ENCODE measurements at regions of chr1 and their contacts with region 1.

Region 1: DNA sequence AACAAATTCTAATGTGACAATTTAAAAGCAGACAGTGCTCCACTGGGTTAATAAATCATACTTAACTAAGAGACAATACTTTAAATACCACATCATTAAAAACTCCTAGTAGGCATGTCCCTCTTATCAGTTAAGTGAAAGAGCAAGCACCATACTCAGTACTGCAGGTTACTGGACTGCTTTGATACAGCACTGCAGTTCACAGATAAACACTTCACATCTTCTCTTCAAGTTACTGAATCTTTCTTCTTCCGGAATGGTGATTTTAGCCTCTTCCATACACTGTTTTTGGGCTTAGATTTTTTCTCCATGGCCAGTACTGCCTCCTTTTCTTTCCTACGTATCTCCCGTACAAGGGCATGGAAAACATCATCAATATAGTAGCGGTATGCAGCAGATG is 11.0 kb downstream of the RIT1 start:
- DNase-seq: no peak
- ATAC-seq: no peak
- H3K4me3 ChIP-seq: no peak overlapping the region
- H3K27ac ChIP-seq: no peak overlapping the region
- H3K4me1 ChIP-seq: no peaks in the 10 kb centered on the region
- H3K27me3 ChIP-seq: no peaks in the 10 kb centered on the region
- CTCF ChIP-seq: no peak

Region 2: GRCh38 chr1:154559466-154560088 is 1340.6 kb before region 1 on chr1:
- CTCF ChIA-PET with region 1: no interaction called
- POLR2A ChIA-PET with region 1: no interaction called
- in situ Hi-C with region 1: no loop called
- intact Hi-C with region 1: no loop called
- DNase-seq: peak; percentile 89
- ATAC-seq: peak; percentile 78
- H3K4me3 ChIP-seq: peak overlapping the region; percentile 81
- H3K27ac ChIP-seq: peak overlapping the region; percentile 91
- H3K4me1 ChIP-seq: peaks cover 14% of the 10 kb centered on the region
- H3K27me3 ChIP-seq: no peaks in the 10 kb centered on the region
- CTCF ChIP-seq: peak; percentile 92

Region 3: GRCh38 chr1:155729031-155729898 is 170.9 kb before region 1 on chr1:
- CTCF ChIA-PET with region 1: no interaction called
- POLR2A ChIA-PET with region 1: interaction called, 10 read pairs
- in situ Hi-C with region 1: no loop called
- intact Hi-C with region 1: no loop called
- DNase-seq: no peak
- ATAC-seq: peak; percentile 87
- H3K4me3 ChIP-seq: no peak overlapping the region
- H3K27ac ChIP-seq: no peak overlapping the region
- H3K4me1 ChIP-seq: no peaks in the 10 kb centered on the region
- H3K27me3 ChIP-seq: no peaks in the 10 kb centered on the region
- CTCF ChIP-seq: peak; percentile 78

Region 4: GRCh38 chr1:155976062-155976912 is 76.1 kb after region 1 on chr1:
- CTCF ChIA-PET with region 1: no interaction called
- POLR2A ChIA-PET with region 1: no interaction called
- in situ Hi-C with region 1: no loop called
- intact Hi-C with region 1: no loop called
- DNase-seq: no peak
- ATAC-seq: 0 out of 2 replicates have a peak, but pooled peaks have one; percentile 15
- H3K4me3 ChIP-seq: peak overlapping the region; percentile 82 to 89
- H3K27ac ChIP-seq: peak overlapping the region; percentile 99
- H3K4me1 ChIP-seq: peaks cover 64% of the 10 kb centered on the region
- H3K27me3 ChIP-seq: no peaks in the 10 kb centered on the region
- CTCF ChIP-seq: no peak

Measured in Panc1 (cell line).